ENCODE measurements at regions of chr10 and their contacts with region 1.

Region 1: DNA sequence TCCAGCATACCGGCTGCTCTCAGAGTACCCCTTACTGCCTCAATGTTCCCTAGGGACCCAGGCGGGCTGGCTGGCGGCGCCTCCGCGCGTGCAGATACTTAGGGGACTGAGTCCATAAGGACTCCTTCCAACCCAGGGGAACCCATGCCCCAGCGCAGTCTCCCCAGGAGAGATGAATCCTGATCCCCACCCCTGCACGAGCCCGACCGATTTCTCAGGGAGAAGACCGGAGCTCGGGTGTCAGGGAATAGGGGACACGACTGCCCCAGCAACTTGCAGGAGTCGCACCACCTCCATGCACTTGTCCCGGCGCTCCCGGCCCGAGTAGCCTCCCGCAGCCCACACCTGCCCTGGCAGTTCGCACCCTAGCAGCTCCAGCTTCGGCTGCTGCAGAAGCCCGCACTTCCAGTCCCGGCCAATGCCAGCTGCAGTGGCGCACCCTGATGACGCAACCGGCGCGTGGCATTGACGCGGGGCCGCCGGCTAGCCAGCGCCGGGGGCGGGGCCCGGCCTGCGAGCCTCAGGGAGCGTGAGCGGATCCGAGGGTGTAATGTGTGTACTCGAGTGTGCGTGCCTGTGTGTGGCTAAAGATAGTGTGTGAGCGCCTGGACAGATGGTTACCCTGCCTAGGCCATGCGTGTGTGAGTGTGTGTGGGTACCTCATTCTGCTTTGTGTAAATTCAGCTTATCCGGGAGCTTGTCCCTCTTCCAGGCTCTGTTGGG is at the start of gene GPAM:
- DNase-seq: peak; percentile 92
- CTCF ChIP-seq: no peak

Region 2: DNA sequence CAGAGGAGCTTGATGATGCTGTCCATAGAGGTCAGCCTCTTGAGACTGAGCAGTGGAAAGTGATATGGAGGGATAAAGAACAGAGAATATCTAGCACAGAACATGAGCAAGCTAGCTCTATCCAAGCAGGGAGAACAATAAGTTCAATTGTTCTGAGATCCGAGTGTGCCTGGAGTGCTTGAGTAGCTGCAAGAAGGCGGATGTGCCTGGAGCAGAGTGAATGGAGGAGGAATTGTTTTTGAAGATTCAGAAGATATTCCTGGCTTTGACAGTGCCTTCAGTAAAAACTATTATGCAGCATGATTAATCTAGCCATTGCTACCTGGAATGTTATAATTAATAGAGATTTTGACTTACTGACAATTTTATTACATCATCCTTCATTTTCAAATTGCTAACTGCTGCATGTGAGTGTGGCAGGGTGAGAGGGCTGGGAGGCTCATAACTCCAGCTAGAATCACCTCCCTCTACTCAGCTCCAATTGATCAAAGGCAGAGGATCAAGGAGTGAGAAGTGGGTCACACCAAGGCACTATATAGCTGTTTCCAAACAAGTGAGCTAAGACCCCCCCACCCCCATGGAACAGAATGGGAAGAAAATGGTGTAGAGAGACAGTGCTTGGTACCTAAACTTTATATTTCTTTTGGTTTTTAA is 803.8 kb before region 1 on chr10:
- in situ Hi-C with region 1: no loop called
- DNase-seq: no peak
- CTCF ChIP-seq: no peak

Region 3: DNA sequence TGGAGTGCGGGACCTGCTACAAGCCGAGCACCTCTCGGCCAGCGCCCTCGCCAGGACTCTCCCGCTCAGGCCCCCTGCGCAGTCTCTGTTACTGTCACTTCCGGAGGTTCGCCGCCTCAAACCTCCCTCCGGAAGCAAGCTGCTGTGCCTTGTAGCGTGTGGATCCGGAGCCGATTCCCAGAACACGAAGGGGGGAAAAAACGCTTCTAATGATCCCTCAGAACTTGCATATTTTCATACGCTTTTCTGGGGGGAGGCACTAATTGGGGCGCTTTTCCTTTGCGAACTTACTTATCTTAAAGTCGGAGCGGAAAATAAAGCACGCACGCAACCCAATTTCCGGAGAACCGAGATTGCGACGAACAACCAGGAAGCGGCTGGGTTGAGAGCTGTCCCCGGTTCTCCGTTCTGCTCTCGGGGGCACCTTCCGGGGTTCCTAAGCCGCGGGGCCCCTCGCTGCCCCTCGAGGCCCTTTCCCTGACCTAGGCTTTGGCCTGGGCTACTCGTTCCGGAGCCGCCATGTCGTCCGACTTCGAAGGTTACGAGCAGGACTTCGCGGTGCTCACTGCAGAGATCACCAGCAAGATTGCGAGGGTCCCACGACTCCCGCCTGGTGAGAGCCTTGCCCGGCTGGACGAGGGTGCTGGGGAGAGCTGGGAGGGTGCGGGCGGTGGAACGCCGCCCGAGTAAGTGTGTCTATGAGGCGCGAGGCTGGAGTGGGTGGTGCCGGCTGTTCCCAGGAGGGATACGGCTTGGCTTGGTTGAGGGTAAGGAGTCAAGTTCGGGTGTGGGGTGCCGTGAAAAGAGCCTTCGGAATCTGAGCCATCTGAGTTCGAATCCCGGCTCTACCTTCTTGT is 263.6 kb after region 1 on chr10 and contains the starts of genes VTI1A and ZDHHC6:
- in situ Hi-C with region 1: loop called (anchors 25 kb)
- DNase-seq: peak; percentile 80
- CTCF ChIP-seq: peak; percentile 27